Mammary epithelial cell (primary cell): ENCODE measurements at regions of chr7 and their contacts with region 1.

Region 1: DNA sequence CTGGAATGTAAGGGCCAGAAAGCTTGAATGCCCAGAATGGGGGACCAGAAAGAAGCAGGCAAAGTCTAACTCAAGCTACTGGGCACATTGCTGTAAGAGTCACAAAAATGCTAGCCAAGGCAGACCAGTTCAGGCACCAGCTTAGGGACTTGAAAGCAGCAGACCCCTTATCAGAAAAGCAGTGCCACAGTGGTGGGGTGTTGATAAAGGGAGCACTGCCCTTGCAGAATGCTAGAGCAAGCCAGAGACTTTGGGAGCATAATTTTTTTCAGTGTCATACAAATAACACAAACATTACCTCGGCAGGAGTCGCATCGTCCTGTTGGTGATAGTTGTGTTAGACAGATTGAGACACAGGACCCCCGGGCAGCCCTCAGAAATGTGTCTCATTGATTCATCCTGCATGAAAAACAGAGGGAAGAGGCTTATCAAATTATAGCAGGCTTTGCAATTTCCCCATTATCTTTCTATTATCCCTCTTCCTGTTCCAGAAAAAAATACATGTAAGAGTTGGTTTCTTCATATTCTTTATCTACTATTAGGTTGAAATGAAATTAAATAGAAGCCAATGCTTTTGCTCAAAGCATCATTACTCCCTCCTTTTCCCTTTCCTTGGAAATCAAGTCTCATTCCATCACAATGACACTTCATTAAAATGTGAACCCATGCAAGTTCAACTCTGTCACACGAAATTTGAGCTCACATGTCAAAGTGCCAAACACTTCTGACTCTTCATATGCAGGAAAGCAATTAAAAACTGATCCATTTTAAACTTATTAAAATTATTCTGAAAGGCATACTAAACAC is 13.4 kb downstream of the LRRC17 start:
- DNase-seq: no peak
- H3K4me3 ChIP-seq: no peak overlapping the region
- H3K27ac ChIP-seq: no peak overlapping the region
- H3K4me1 ChIP-seq: peaks cover 8% of the 10 kb centered on the region
- H3K27me3 ChIP-seq: no peaks in the 10 kb centered on the region
- CTCF ChIP-seq: no peak

Region 2: GRCh38 chr7:102908676-102909075 is 17.5 kb before region 1 on chr7:
- CTCF ChIA-PET with region 1: no interaction called
- dilution Hi-C with region 1: no loop called
- in situ Hi-C with region 1: no loop called
- intact Hi-C with region 1: no loop called
- DNase-seq: no peak
- H3K4me3 ChIP-seq: no peak overlapping the region
- H3K27ac ChIP-seq: no peak overlapping the region
- H3K4me1 ChIP-seq: peaks cover 6% of the 10 kb centered on the region
- H3K27me3 ChIP-seq: no peaks in the 10 kb centered on the region
- CTCF ChIP-seq: no peak

Region 3: DNA sequence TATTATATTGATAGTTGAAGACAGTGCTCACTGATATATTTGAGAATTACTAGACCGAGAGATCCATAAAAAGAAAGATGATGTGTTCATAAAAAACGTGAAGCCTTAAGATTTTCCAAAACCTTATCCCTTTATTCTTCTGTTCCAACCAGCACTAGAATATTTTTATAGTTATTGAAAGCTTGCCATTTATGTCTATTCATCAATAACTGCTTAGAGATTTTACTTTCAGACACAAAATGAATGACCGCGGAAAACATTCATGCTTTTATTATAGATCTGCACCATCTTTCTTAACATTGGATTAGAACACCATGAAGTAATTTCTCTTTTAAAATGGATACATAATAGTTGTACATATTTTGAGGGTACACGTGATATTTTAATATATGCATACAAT is 70.8 kb after region 1 on chr7:
- CTCF ChIA-PET with region 1: no interaction called
- dilution Hi-C with region 1: loop called (anchors 5 kb)
- in situ Hi-C with region 1: no loop called
- intact Hi-C with region 1: no loop called
- DNase-seq: no peak
- H3K4me3 ChIP-seq: no peak overlapping the region
- H3K27ac ChIP-seq: no peak overlapping the region
- H3K4me1 ChIP-seq: peaks cover 17% of the 10 kb centered on the region
- H3K27me3 ChIP-seq: no peaks in the 10 kb centered on the region
- CTCF ChIP-seq: no peak

Region 4: DNA sequence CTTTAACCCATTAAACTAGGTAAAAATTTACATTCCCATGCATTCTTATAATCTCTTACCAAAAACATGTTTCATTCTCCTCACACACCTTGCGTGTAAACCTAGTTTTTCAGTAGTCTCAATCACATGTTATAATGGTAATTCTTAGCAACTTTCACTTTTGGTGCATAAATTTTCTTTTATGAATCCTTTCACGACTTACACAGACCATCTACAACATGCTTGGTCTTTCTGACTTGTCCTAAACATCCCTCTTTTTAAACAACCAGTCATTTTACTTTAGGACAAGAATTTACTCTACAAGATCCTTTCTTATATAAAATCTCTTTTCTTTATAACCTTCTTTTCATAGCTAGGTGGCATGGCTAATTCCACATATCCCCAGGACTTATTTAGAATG is 122.7 kb after region 1 on chr7:
- CTCF ChIA-PET with region 1: no interaction called
- dilution Hi-C with region 1: no loop called
- in situ Hi-C with region 1: no loop called
- intact Hi-C with region 1: no loop called
- DNase-seq: peak; percentile 17
- H3K4me3 ChIP-seq: no peak overlapping the region
- H3K27ac ChIP-seq: no peak overlapping the region
- H3K4me1 ChIP-seq: no peaks in the 10 kb centered on the region
- H3K27me3 ChIP-seq: no peaks in the 10 kb centered on the region
- CTCF ChIP-seq: no peak